RWPE1 (cell line): ENCODE measurements at regions of chr5 and their contacts with region 1.

Region 1: DNA sequence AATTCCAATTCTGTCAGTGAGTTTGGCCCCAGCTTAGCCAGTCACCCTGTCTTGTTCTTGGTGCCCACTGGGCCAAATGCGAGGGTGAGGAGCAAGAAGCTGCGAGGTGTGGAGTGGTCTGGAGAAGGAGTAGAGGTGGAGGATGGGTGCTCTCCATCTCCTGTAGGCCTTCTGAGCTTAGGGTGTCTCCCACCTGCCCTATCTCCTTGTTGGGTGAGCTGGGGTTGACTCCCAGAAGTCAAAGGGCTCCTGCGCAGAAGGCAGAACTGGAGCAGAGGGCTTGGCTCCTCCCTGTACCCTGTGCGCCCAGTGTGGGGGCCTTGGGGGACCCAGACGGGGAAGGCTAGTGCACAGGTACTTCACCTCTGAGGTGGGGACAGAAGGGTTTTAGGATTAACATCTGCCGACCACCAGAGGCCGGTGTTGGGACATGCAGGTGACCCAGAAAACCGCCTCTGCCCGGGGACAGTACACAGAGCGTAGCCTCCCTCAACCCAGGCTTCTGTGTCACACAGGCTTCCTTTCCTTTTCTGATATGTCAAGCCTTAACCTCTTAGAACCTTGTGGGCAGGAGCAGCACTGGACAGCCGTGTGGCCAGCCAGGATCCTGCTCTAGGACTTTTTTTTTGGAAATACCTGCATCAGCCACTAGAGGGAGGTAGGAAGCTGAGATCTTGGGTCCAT is 16.9 kb downstream of the IL5 start:
- DNase-seq: peak; percentile 77
- H3K27ac ChIP-seq: no peak overlapping the region
- CTCF ChIP-seq: peak; percentile 97

Region 2: GRCh38 chr5:132433141-132433540 is 93.3 kb before region 1 on chr5:
- CTCF ChIA-PET with region 1: no interaction called
- POLR2A ChIA-PET with region 1: no interaction called
- DNase-seq: no peak
- H3K27ac ChIP-seq: no peak overlapping the region
- CTCF ChIP-seq: no peak

Region 3: GRCh38 chr5:132506094-132506692 is 20.2 kb before region 1 on chr5:
- CTCF ChIA-PET with region 1: interaction called, 16 read pairs
- POLR2A ChIA-PET with region 1: no interaction called
- DNase-seq: peak; percentile 77
- H3K27ac ChIP-seq: no peak overlapping the region
- CTCF ChIP-seq: peak; percentile 79

Region 4: DNA sequence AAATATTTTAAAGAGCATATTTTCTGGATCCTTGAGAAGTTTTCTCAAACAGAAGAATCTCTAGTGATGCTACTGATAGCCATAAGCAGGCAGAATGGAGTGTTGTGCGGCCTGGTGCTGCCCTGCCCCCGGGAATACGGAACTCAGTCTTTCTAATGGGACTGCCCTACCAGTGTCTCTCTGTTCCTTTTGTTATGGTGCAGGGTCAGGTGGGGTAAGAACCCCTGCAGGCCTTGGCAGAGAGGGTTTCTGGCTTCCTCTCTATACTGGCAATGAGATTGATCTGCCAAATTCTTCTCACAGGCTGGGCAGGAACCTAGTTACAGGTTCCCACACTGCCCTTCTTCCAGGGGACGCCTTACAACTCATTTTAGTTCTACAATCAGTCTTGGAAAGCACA is 14.3 kb after region 1 on chr5:
- CTCF ChIA-PET with region 1: interaction called, 20 read pairs
- POLR2A ChIA-PET with region 1: no interaction called
- DNase-seq: no peak
- H3K27ac ChIP-seq: no peak overlapping the region
- CTCF ChIP-seq: no peak

Region 5: DNA sequence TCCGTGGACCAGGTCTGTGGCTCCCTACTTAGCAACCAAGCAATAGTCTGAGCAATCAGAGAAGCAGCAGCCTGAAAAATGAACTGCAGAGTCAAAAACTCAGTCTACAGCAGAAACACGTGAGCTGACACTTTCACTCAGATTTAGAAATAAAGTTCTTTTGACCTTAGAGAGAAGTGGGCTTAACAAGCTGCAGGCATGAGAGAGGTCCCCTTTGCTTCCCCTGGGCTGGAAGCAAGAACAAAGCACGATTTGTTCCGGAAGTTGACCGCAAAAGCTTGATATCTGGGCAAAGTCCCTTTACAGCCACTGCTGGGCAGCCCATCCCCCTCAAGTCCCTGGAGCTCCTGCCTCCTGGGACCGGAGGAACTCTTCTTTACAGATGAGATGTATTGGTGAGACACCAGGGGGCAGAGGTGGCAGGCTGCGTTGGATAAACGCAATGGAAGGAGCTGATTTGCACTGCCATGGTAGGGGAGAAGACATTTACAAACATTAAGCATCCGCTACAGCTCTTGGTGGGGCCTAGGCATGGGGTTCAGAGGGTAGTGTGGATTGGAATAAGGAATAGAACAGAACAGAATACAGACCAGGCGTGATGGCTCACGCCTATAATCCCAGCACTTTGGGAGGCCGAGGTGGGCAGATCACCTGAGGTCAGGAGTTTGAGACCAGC is 280.9 kb after region 1 on chr5:
- CTCF ChIA-PET with region 1: no interaction called
- POLR2A ChIA-PET with region 1: no interaction called
- DNase-seq: no peak
- H3K27ac ChIP-seq: no peak overlapping the region
- CTCF ChIP-seq: no peak